Transverse colon (tissue), 4 donors: ENCODE measurements at regions of chr17 and their contacts with region 1.

Region 1: DNA sequence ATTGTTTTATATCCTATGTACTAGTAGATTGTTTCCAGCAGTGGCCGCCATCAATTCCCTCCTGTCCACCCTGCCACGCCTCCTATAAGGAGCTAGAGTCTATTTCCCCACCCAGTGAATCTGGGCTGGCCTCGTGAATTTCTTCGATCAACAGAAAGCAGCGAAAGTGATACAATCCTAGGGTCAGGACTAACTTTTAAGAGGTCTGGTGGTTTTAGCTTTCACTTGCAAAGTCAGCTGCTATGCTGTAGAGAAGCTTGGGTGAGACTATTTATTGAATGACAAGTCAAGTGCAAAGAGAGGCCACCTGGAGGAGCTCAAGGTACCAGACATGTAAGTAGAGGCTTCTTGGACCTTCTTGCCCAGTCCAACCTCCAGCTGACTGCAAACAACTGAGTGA is 80.9 kb upstream of the MTMR4 start:
- DNase-seq: no peak
- H3K4me3 ChIP-seq: no peak overlapping the region
- H3K27ac ChIP-seq: no peak overlapping the region
- H3K4me1 ChIP-seq: no peaks in the 10 kb centered on the region
- H3K27me3 ChIP-seq: no peaks in the 10 kb centered on the region
- CTCF ChIP-seq: no peak
- EP300 ChIP-seq: no peak
- POLR2A ChIP-seq: no peak

Region 2: GRCh38 chr17:58531661-58532554 is 63.4 kb before region 1 on chr17:
- in situ Hi-C with region 1: loop called in 1 of 4 experiments (anchors 10 kb)
- intact Hi-C with region 1: no loop called
- DNase-seq: peak; percentile 64
- H3K4me3 ChIP-seq: peak overlapping the region; percentile 20 to 55 (median 44)
- H3K27ac ChIP-seq: peak overlapping the region; percentile 29 to 48 (median 39)
- H3K4me1 ChIP-seq: peaks cover 0 to 20% (median 5%) of the 10 kb centered on the region in 4 donors
- H3K27me3 ChIP-seq: peaks cover 9% of the 10 kb centered on the region
- CTCF ChIP-seq: no peak
- EP300 ChIP-seq: no peak
- POLR2A ChIP-seq: no peak

Region 3: GRCh38 chr17:58703137-58703972 is 108.0 kb after region 1 on chr17:
- in situ Hi-C with region 1: no loop called
- intact Hi-C with region 1: no loop called
- DNase-seq: no peak
- H3K4me3 ChIP-seq: no peak overlapping the region
- H3K27ac ChIP-seq: no peak overlapping the region
- H3K4me1 ChIP-seq: no peaks in the 10 kb centered on the region
- H3K27me3 ChIP-seq: no peaks in the 10 kb centered on the region
- CTCF ChIP-seq: no peak
- EP300 ChIP-seq: no peak
- POLR2A ChIP-seq: no peak

Region 4: DNA sequence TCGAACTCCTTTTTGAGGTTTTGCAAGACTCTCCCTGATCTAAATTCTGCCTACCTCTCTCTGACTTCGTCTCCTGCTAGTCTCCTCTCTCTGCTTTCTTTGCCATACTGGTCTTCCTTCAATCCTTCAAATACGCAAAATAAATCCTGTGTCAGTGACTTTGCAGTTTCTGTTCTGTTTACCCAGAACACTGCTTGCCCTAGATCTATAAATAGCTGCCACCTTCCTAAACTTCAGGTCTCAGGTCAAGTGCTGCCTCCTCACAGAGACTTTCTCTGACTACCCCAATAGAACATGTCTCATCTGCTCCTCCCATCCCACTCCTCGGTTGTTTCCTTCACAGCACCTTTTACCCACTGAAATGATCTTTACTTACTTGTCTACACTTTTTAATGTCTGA is 432.4 kb after region 1 on chr17:
- in situ Hi-C with region 1: no loop called
- intact Hi-C with region 1: no loop called
- DNase-seq: no peak
- H3K4me3 ChIP-seq: no peak overlapping the region
- H3K27ac ChIP-seq: no peak overlapping the region
- H3K4me1 ChIP-seq: peaks cover 0 to 3% (median 0%) of the 10 kb centered on the region in 4 donors
- H3K27me3 ChIP-seq: no peaks in the 10 kb centered on the region
- CTCF ChIP-seq: no peak
- EP300 ChIP-seq: no peak
- POLR2A ChIP-seq: no peak